Thyroid gland (tissue), 4 donors: ENCODE measurements at regions of chr4 and their contacts with region 1.

Region 1: DNA sequence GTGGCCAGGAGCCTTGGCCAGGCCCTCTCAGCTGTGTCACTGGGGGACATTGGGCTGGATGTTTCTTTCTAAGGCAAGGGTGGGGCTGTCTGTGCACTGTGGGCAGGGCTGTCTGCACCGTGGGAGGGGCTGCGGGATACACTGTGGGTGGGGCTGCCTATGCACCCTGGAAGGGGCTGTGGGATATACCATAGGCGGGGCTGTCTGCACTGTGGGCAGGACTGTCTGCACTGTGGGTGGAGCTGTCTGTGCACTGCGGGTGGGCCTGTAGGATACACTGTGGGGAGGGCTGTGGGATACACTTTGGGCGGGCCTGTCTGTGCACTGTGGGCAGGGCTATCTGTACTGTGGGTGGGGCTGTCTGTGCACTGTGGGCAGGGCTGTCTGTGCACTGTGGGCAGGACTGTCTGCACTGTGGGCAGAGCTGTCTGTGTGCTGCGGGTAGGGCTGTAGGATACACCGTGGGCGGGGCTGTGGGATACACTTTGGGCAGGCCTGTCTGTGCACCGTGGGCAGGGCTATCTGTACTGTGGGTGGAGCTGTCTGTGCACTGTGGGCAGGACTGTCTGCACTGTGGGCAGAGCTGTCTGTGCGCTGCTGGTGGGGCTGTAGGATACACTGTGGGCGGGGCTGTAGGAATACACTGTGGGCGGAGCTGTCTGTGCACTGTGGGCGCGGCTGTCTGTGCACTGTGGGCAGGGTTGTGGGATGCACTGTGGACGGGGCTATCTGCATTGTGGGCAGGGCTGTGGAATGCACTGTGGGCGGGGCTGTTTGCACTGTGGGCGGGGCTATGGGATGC is 31.1 kb downstream of the ACOX3 start:
- DNase-seq: no peak
- H3K4me3 ChIP-seq: no peak overlapping the region
- H3K27ac ChIP-seq: no peak overlapping the region
- H3K4me1 ChIP-seq: no peaks in the 10 kb centered on the region
- H3K27me3 ChIP-seq: no peaks in the 10 kb centered on the region
- CTCF ChIP-seq: no peak
- POLR2A ChIP-seq: no peak

Region 2: DNA sequence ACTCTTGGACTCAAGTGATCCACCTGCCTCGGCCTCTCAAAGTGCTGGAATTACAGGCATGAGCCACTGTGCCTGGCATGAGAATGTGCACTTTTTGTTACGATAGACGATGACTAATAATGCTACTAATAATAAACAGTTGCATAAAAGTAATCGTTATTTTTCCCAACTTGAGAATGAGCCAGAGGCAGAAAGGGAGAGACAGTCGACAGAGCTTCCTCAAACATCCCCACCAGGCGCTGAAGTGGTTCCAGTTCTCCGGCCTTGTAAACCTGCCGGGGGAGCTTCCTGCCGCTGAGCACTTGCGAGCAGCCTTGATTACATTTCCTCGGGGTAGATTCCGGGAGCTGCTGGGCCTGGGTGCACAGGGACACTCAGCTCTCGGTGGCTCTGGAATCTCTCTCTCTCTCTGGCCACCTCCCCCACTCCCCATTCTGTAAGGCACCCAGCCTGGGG is 148.8 kb before region 1 on chr4:
- intact Hi-C with region 1: loop called (anchors 5 kb)
- DNase-seq: peak; percentile 69 to 79
- H3K4me3 ChIP-seq: no peak overlapping the region
- H3K27ac ChIP-seq: peak overlapping the region in 2 of 3 donors; percentile 27 to 56
- H3K4me1 ChIP-seq: peaks cover 3 to 15% of the 10 kb centered on the region in 2 donors
- H3K27me3 ChIP-seq: no peaks in the 10 kb centered on the region
- CTCF ChIP-seq: no peak
- POLR2A ChIP-seq: no peak